Calu3 (cell line): ENCODE measurements at regions of chr16 and their contacts with region 1.

Region 1: DNA sequence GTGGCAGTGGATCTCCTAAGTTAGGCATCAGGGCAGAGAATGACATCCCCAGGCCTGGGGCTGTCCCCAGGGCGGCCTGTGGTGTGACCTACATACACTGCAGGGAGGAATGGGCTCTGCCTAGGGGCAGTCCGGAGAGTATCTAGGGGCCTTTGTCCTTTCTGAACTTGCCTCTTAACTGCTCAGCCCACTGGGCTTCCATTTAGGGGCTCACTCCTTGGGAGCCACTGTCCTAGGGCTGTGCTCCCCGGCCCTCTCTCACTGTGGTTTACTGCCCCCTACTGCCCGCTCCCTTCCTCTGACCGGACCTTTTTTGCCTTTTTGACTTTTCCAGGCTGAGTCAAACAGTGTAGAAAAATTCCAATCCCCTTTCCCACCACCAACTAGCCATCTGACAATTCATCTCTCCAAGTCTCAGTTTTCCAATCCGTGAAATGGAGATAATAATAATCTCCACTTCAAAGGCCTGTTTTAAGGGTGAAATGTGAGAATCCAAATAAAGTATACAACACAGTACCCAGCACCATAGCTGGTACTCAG is 66.8 kb downstream of the DNAH3 start:
- DNase-seq: peak; percentile 82
- H3K4me3 Mint-ChIP-seq: no peak overlapping the region
- H3K27ac Mint-ChIP-seq: no peak overlapping the region
- H3K4me1 Mint-ChIP-seq: peaks cover 7% of the 10 kb centered on the region
- H3K27me3 Mint-ChIP-seq: no peaks in the 10 kb centered on the region
- CTCF ChIP-seq: peak; percentile 82

Region 2: DNA sequence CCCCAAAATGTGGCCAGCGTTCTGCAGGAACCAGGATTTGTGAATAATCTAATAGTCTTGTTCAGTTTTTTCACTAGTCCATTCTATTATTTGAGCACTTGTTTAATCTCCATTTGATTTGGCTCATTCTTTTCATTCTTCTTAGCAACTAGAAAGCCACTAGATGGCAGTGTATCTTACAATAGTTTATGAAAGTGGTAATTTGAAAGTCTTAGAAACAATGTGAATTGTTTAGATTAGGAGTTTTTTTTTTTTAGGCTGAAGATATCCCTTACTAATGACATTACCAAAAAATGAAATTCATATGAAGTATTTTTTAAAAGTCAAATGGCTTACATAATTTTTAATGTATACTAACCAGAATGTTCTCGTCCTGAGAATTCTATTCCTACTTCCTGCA is 284.2 kb before region 1 on chr16:
- CTCF ChIA-PET with region 1: no interaction called
- intact Hi-C with region 1: loop called (anchors 1 kb)
- DNase-seq: no peak
- H3K4me3 Mint-ChIP-seq: no peak overlapping the region
- H3K27ac Mint-ChIP-seq: no peak overlapping the region
- H3K4me1 Mint-ChIP-seq: no peaks in the 10 kb centered on the region
- H3K27me3 Mint-ChIP-seq: no peaks in the 10 kb centered on the region
- CTCF ChIP-seq: peak; percentile 23

Region 3: DNA sequence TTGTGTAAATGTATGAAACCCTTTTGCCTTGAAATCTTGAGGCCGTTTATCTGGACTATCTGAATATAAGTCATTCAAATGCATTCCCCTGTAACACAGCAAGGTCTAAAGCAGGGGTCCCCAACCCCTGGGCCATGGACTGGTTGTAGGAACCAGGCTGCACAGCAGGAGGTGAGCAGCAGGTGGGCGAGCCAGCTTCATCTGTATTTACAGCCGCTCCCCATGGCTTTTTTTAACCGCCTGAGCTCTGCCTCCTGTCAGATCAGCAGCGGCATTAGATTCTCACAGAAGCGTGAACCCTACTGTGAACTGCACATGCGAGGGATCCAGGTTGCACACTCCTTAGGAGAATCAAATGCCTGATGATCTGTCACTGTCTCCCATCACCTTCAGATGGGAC is 42.7 kb after region 1 on chr16:
- CTCF ChIA-PET with region 1: no interaction called
- intact Hi-C with region 1: no loop called
- DNase-seq: no peak
- H3K4me3 Mint-ChIP-seq: no peak overlapping the region
- H3K27ac Mint-ChIP-seq: no peak overlapping the region
- H3K4me1 Mint-ChIP-seq: no peaks in the 10 kb centered on the region
- H3K27me3 Mint-ChIP-seq: peaks cover 52% of the 10 kb centered on the region
- CTCF ChIP-seq: no peak